ENCODE measurements at regions of chr10 and their contacts with region 1.

Region 1: DNA sequence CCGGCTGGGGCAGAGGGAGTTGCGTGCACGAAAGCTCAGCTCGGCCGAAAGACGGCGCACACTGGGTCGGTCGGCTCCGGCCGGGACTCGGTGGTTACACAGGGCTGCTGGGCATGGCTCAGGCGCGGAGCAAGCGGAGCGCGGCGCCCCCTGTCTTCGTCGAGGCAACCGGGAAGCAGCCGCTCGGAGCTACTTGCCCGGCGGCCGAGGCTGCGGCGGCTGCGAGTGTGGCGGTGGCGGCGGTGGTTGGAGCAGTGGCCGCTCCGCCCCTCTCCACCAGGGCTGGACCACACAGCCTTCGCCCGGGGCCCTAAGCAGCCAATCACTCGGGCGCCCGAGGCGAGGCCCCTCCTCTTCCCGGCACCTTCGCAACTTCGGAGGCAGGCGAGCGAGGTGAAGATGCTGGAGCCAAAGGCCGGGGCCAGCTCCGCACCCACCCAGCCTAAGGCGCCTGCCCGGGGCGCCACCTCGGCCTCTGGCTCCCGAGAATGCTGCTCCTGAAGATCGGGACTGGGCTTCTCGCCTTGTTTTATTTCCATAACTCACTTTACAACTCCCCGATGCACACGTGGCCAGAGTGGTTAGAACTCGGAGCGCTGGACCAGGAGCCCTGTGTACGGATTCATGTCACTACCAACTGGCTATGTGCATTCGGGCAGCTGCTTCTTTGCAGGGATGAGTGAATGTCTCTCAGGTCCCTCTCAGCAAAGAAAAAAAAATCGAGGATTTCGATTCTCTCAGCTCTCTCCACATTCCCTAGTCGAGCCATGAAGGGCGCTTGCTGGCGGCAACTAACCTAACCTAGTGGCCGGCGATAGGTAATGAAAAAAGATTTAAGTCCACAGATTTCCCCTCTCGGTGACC is at the start of gene TLL2:
- DNase-seq: peak; percentile 46 to 90
- H3K4me3 ChIP-seq: peak within 1 kb of the TSS; percentile 32 to 83
- H3K27ac ChIP-seq: peak within 1 kb of the TSS in 1 of 2 donors; percentile 39
- H3K4me1 ChIP-seq: peaks cover 6 to 9% of the 10 kb centered on the region in 2 donors
- H3K27me3 ChIP-seq: no peaks in the 10 kb centered on the region
- CTCF ChIP-seq: peak; percentile 54 to 79 (median 56)
- total RNA-seq, gene TLL2: not detected

Region 2: DNA sequence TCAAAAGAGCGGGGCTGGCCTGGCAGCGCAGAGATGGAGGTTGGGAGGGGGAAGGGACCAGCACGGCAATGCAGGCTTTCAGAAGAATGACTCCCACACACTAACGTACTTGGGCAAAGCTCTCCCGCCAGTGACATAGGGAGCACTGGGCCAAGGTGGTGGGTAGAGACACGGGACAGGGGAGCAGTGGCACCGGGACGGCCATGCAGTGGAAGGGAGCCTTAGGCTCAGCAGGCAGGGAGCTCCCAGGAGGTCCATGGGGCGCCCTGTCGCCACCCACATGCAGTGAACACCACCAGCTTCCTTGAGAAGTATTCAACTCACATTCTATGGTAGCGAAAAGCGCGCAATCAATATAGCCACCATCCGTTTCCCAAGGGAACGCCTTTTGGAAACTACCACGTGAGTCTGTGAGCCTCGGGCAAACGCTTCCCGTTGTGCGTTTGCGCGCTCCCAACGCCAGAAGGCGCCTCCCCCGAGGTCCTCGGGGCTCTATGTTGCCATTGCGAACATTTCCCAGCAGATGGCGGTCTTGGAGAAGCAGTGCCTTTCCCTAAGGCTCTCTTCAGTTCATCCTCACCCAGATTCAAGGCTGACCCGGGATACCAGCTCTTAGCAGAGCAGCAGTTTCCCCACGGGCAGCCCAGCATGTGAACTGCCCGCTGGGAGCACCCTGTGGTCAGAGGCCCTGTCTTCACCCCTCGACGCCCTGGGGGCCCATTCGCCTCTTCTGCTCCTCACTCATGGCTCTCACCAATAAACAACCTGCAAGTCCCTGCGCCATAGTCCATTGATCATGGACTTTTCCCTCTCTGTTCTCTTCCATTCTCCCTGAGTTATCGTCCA is 138.7 kb before region 1 on chr10:
- intact Hi-C with region 1: loop called (anchors 1 kb)
- DNase-seq: peak; percentile 33 to 92
- H3K4me3 ChIP-seq: peak overlapping the region; percentile 45 to 61
- H3K27ac ChIP-seq: no peak overlapping the region
- H3K4me1 ChIP-seq: peaks cover 0 to 4% of the 10 kb centered on the region in 2 donors
- H3K27me3 ChIP-seq: no peaks in the 10 kb centered on the region
- CTCF ChIP-seq: peak; percentile 89 to 99 (median 99)

Region 3: GRCh38 chr10:96586419-96587263 is 72.7 kb after region 1 on chr10 and contains the start of gene TM9SF3:
- intact Hi-C with region 1: loop called (anchors 2 kb)
- DNase-seq: peak; percentile 67 to 96
- H3K4me3 ChIP-seq: peak within 1 kb of the TSS; percentile 96 to 97
- H3K27ac ChIP-seq: peak within 1 kb of the TSS; percentile 97 to 98
- H3K4me1 ChIP-seq: peaks cover 3 to 44% of the 10 kb centered on the region in 2 donors
- H3K27me3 ChIP-seq: no peaks in the 10 kb centered on the region
- CTCF ChIP-seq: peak in 1 of 3 experiments; percentile 18
- total RNA-seq, gene TM9SF3: 30.4 TPM